Activated naive CD4-positive, alpha-beta T cell treated with anti-CD3 and anti-CD28 coated beads for 36 hours (primary cell): ENCODE measurements at regions of chr15 and their contacts with region 1.

Region 1: DNA sequence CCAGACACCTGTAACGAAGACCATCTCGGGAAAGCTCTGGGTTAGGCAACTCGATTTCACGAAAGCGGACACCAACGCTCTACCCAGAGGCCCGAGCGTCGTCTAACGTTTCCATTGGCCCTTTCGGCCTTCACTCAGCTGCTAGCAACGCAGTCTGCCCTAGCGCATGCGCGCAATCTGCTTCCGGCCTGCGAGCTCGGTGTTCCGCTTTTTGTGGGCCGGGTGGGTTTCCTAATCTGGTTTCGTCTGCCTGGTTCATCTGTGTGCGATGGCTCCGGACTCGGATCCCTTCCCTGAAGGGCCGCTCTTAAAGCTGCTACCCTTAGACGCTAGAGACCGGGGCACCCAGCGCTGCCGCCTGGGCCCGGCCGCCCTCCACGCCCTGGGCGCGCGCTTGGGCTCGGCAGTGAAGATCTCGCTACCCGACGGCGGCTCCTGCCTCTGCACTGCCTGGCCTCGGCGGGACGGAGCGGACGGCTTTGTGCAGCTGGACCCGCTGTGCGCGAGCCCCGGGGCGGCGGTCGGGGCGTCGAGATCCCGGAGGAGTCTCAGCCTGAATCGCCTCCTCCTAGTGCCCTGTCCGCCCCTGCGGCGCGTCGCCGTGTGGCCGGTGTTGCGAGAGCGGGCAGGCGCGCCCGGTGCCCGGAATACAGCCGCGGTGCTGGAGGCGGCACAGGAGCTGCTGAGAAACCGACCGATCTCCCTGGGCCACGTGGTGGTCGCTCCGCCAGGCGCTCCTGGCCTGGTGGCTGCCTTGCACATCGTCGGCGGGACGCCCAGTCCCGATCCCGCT is 24.0 kb upstream of the GATM start:
- DNase-seq: peak; percentile 98
- H3K4me3 Mint-ChIP-seq: peak overlapping the region; percentile 99
- H3K27ac Mint-ChIP-seq: peak overlapping the region; percentile 89
- H3K4me1 Mint-ChIP-seq: peaks cover 27% of the 10 kb centered on the region
- H3K27me3 Mint-ChIP-seq: no peaks in the 10 kb centered on the region

Region 2: DNA sequence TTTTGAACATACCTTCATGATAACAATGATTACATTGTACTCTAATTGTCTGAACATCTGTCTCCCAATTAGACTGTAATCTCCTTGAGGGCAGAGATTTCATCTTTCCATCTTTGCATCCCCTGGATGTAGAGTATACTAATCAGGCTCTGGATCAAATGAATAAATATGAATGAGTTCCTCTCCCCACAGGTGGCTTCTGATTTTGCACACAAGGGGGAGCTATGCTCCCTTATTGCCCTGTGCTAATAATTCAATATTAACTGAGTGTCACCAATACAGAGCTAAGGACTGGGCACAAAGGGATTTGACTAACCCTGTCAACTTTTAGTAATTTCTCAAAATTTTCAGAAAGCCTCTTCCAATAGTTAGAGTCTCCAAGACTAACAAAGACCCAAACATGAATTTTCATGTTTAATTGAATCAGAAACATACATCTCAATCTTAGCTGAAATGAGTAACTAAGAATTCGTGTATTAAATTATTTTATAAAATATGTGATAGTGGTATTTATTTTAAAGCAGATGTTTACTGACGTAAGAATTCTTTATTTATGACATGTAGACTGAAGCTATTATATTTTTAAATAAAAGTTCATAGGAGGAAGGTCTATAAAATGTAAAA is 275.7 kb before region 1 on chr15:
- CTCF ChIA-PET with region 1: interaction called, 4 read pairs
- intact Hi-C with region 1: loop called (anchors 1 kb)
- DNase-seq: peak; percentile 62
- H3K4me3 Mint-ChIP-seq: no peak overlapping the region
- H3K27ac Mint-ChIP-seq: no peak overlapping the region
- H3K4me1 Mint-ChIP-seq: peaks cover 4% of the 10 kb centered on the region
- H3K27me3 Mint-ChIP-seq: peaks cover 47% of the 10 kb centered on the region

Region 3: GRCh38 chr15:45205192-45205591 is 197.2 kb before region 1 on chr15:
- CTCF ChIA-PET with region 1: interaction called, 33 read pairs
- intact Hi-C with region 1: loop called (anchors 1 kb)
- DNase-seq: peak; percentile 86
- H3K4me3 Mint-ChIP-seq: no peak overlapping the region
- H3K27ac Mint-ChIP-seq: no peak overlapping the region
- H3K4me1 Mint-ChIP-seq: peaks cover 3% of the 10 kb centered on the region
- H3K27me3 Mint-ChIP-seq: peaks cover 4% of the 10 kb centered on the region

Region 4: GRCh38 chr15:45307230-45307924 is 95.0 kb before region 1 on chr15:
- CTCF ChIA-PET with region 1: interaction called, 4 read pairs
- intact Hi-C with region 1: loop called (anchors 1 kb)
- DNase-seq: no peak
- H3K4me3 Mint-ChIP-seq: peak overlapping the region; percentile 4
- H3K27ac Mint-ChIP-seq: no peak overlapping the region
- H3K4me1 Mint-ChIP-seq: peaks cover 4% of the 10 kb centered on the region
- H3K27me3 Mint-ChIP-seq: peaks cover 5% of the 10 kb centered on the region

Region 5: GRCh38 chr15:45587095-45587860 is 184.9 kb after region 1 on chr15 and contains the start of gene BLOC1S6:
- CTCF ChIA-PET with region 1: no interaction called
- intact Hi-C with region 1: loop called (anchors 1 kb)
- DNase-seq: peak; percentile 91
- H3K4me3 Mint-ChIP-seq: peak within 1 kb of the TSS; percentile 100
- H3K27ac Mint-ChIP-seq: peak within 1 kb of the TSS; percentile 100
- H3K4me1 Mint-ChIP-seq: peaks cover 41% of the 10 kb centered on the region
- H3K27me3 Mint-ChIP-seq: no peaks in the 10 kb centered on the region
- total RNA-seq, gene BLOC1S6: 36.8 to 42.8 TPM